ENCODE measurements at regions of chr22 and their contacts with region 1.

Region 1: DNA sequence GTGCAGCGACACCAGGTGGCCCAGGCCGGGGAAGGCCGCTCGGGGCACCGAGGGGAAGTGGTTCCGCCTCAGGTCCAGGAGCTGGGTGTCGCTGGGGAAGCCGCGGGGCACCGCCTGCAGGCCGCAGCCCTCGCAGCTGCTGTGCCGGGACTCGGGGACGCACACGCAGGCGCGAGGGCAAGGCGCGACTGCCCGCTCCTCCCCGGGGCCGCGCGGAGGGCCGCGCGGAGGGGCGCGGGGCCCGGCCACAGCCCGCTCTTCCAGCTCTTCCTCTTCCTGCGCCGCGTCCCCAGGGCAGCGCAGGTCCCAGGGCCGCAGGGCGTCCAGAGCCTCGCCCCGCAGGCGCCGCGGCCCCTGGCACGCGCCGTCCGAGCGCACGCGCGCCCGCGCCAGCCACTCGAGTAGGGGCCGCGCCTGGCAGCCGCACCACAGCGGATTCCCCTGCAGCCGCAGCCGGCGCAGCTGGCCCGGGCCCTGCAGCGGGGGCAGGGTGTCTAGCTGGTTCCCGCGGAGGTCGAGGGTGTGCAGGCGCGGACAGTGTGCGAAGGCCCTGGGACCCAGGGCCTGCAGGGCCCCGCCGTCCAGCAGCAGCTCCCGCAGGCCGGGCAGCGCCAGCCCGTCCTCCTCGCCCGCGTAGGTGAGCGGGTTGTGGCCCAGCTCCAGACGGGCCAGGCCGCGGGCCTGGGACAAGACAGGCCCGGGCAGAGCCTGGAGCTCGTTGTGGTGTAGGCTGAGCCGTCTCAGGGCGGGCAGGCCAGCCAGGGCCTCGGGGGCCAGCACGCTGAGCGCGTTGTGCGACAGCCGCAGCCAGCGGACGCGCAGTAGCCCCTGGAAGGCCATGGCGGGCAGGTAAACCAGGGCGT is 2.8 kb downstream of the CHADL start:
- DNase-seq: peak; percentile 90
- ATAC-seq: peak; percentile 95
- H3K4me3 Mint-ChIP-seq: no peak overlapping the region
- H3K27ac Mint-ChIP-seq: no peak overlapping the region
- H3K4me1 Mint-ChIP-seq: peaks cover 6% of the 10 kb centered on the region
- H3K27me3 Mint-ChIP-seq: no peaks in the 10 kb centered on the region

Region 2: GRCh38 chr22:40911772-40912171 is 326.2 kb before region 1 on chr22:
- CTCF ChIA-PET with region 1: interaction called, 11 read pairs
- POLR2A ChIA-PET with region 1: no interaction called
- DNase-seq: no peak
- ATAC-seq: no peak
- H3K4me3 Mint-ChIP-seq: no peak overlapping the region
- H3K27ac Mint-ChIP-seq: no peak overlapping the region
- H3K4me1 Mint-ChIP-seq: no peaks in the 10 kb centered on the region
- H3K27me3 Mint-ChIP-seq: no peaks in the 10 kb centered on the region

Region 3: GRCh38 chr22:41091132-41092022 is 146.6 kb before region 1 on chr22:
- CTCF ChIA-PET with region 1: interaction called, 13 read pairs
- POLR2A ChIA-PET with region 1: interaction called, 8 read pairs
- DNase-seq: peak; percentile 99
- ATAC-seq: peak; percentile 87
- H3K4me3 Mint-ChIP-seq: peak overlapping the region; percentile 97
- H3K27ac Mint-ChIP-seq: peak overlapping the region; percentile 100
- H3K4me1 Mint-ChIP-seq: peaks cover 23% of the 10 kb centered on the region
- H3K27me3 Mint-ChIP-seq: no peaks in the 10 kb centered on the region

Region 4: DNA sequence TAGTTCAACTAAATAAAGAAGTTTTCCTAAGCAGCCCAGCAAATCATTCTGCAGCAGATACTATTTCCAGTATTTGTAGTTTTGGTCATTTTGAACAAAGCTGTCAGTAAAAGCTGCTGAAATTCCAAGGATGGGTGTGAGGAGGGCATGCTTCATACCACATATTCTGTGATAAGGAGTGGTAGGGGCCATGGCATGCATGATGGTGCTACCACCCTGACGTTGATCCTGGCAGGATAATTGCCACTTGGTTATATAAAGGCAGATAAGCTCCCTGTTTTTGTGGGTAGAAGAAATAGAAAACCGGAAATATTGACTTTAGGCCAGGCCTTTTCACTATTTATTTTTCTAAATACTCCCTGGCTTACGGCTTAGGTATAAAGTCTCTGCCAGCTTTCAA is 65.9 kb before region 1 on chr22:
- CTCF ChIA-PET with region 1: interaction called, 16 read pairs
- POLR2A ChIA-PET with region 1: no interaction called
- DNase-seq: no peak
- ATAC-seq: no peak
- H3K4me3 Mint-ChIP-seq: no peak overlapping the region
- H3K27ac Mint-ChIP-seq: no peak overlapping the region
- H3K4me1 Mint-ChIP-seq: peaks cover 13% of the 10 kb centered on the region
- H3K27me3 Mint-ChIP-seq: no peaks in the 10 kb centered on the region

Region 5: GRCh38 chr22:41197038-41197972 is 40.6 kb before region 1 on chr22:
- CTCF ChIA-PET with region 1: interaction called, 39 read pairs
- POLR2A ChIA-PET with region 1: interaction called, 4 read pairs
- DNase-seq: peak; percentile 83
- ATAC-seq: peak; percentile 93
- H3K4me3 Mint-ChIP-seq: peak overlapping the region; percentile 87
- H3K27ac Mint-ChIP-seq: peak overlapping the region; percentile 67
- H3K4me1 Mint-ChIP-seq: peaks cover 15% of the 10 kb centered on the region
- H3K27me3 Mint-ChIP-seq: peaks cover 20% of the 10 kb centered on the region

Region 6: DNA sequence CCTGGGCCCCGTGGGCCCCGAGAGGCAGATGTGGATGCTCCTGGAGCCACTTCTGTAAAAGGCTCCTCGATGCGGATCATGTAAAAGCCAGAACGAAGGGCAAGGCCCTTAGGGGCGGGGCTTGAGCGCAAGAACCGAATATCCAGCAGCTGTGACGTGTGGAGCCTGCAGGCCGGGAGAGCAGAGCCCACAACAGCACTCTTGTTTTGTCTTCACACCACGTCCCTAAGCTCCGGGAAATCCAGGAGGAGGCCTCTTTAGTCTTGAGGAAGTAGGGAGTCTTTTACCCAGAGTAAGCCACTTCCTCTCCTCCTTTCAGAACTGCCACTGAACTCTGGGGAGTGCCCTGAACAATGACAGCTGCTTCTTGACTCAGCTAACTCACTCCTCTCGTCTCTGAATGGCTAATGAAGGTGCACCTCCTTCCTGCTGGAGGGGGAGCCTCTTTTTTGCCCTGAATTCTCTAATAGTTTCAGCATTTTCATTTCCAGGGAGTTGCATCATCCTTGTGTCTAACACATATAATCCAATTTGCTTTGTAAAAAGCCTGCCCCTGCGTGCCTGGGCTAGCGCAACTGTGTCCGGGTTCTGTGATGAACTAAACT is 20.3 kb before region 1 on chr22:
- CTCF ChIA-PET with region 1: interaction called, 38 read pairs
- POLR2A ChIA-PET with region 1: interaction called, 4 read pairs
- DNase-seq: peak; percentile 67
- ATAC-seq: peak; percentile 93
- H3K4me3 Mint-ChIP-seq: peak overlapping the region; percentile 65
- H3K27ac Mint-ChIP-seq: peak overlapping the region; percentile 82
- H3K4me1 Mint-ChIP-seq: peaks cover 31% of the 10 kb centered on the region
- H3K27me3 Mint-ChIP-seq: no peaks in the 10 kb centered on the region

Region 7: GRCh38 chr22:41387341-41387740 is 149.4 kb after region 1 on chr22:
- CTCF ChIA-PET with region 1: no interaction called
- POLR2A ChIA-PET with region 1: no interaction called
- DNase-seq: no peak
- ATAC-seq: no peak
- H3K4me3 Mint-ChIP-seq: no peak overlapping the region
- H3K27ac Mint-ChIP-seq: no peak overlapping the region
- H3K4me1 Mint-ChIP-seq: peaks cover 9% of the 10 kb centered on the region
- H3K27me3 Mint-ChIP-seq: peaks cover 2% of the 10 kb centered on the region